ENCODE measurements at regions of chr5 and their contacts with region 1.

Region 1: DNA sequence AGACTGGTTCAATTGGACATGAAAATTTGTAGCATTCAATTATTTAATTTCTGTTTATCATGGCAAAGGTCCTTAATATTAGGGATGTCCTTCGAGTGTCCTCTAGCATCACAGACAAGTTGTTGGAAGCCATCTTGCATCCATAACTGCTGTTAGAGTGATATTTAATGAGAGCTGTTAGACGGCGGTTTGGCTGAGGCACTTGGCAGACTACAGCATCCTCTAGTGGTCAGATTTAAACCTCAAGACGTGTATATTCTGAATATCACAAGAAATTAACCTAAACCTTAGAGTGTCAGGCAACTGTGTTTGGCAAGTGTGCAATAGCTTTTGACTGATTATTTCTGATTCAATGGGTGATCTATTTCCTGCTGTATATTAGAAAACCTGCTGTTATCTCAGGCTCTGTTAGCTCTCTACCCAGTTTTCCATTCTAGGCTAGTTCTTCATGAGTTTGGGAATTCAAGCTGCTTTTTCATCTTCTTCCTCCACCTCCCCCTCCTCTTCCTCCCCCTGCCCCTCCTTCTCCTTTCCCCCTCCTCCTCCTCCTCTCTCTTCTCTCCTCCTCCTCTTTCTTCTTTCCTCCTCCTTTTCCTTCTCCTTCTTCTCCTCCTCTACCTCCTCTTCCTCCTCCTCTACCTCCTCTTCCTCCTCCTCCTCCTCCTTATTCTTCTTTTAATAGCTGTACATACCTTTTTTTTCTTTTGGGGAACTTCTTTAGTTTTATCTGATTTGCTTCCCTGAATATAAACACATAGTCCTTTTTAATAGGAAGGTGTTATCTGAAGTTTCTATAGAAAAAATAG is 8.6 kb downstream of the SPINK1 start:
- DNase-seq: peak; percentile 63
- ATAC-seq: peak; percentile 94
- H3K4me3 Mint-ChIP-seq: no peak overlapping the region
- H3K27ac Mint-ChIP-seq: no peak overlapping the region
- H3K4me1 Mint-ChIP-seq: no peaks in the 10 kb centered on the region
- H3K27me3 Mint-ChIP-seq: no peaks in the 10 kb centered on the region
- CTCF ChIP-seq: peak; percentile 81

Region 2: DNA sequence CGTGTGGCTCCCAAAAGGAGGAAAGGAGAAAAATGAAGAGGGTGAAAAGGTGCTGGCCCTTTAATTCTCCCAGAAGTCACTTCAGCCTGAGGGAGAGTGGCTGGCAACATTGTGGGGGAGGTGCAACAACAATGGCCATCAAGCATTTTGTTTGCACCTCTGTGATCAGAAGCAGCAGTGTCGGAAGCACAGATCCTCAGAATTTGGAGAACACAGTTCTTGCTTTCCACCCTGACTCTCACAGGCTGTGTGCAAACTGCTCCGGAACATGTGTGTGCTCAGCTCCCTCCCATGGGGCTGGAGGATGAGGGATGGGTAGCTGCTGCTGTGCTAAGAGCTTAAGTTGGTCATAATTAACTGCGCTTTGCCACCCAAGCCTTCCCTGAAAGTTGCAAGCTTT is 440.1 kb before region 1 on chr5:
- CTCF ChIA-PET with region 1: no interaction called
- POLR2A ChIA-PET with region 1: no interaction called
- intact Hi-C with region 1: no loop called
- DNase-seq: no peak
- ATAC-seq: no peak
- H3K4me3 Mint-ChIP-seq: no peak overlapping the region
- H3K27ac Mint-ChIP-seq: no peak overlapping the region
- H3K4me1 Mint-ChIP-seq: no peaks in the 10 kb centered on the region
- H3K27me3 Mint-ChIP-seq: peaks cover 7% of the 10 kb centered on the region
- CTCF ChIP-seq: no peak

Region 3: DNA sequence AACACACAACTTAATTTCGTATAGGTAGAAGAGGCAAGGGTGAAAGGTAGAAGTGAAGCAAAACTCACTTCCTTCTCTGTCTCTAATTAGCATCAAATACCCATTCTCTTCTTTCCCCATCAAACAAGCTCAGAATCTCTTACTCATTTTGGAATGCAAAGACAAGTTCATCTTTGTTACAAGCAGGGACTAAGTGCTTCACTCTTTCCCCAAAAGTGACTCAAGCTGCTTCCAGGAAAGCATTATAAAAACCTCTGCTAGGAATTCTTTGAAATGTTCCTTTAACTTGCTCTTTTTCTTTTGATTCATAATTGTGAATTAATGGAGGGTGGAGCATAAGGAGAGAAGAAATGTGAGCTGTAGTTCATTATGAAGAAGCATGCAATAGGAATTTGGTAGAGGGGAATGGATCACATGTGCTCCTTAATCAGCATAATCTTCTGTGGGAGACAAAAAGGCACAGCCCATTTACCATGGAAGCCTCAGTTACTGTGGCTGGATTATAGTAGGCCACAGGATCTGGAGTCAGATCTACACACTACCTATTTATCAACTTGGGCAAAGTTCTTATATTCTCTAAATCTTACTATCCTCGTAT is 203.5 kb before region 1 on chr5:
- CTCF ChIA-PET with region 1: interaction called, 14 read pairs
- POLR2A ChIA-PET with region 1: no interaction called
- intact Hi-C with region 1: no loop called
- DNase-seq: no peak
- ATAC-seq: no peak
- H3K4me3 Mint-ChIP-seq: no peak overlapping the region
- H3K27ac Mint-ChIP-seq: peak overlapping the region; percentile 10
- H3K4me1 Mint-ChIP-seq: peaks cover 2% of the 10 kb centered on the region
- H3K27me3 Mint-ChIP-seq: no peaks in the 10 kb centered on the region
- CTCF ChIP-seq: no peak

Region 4: DNA sequence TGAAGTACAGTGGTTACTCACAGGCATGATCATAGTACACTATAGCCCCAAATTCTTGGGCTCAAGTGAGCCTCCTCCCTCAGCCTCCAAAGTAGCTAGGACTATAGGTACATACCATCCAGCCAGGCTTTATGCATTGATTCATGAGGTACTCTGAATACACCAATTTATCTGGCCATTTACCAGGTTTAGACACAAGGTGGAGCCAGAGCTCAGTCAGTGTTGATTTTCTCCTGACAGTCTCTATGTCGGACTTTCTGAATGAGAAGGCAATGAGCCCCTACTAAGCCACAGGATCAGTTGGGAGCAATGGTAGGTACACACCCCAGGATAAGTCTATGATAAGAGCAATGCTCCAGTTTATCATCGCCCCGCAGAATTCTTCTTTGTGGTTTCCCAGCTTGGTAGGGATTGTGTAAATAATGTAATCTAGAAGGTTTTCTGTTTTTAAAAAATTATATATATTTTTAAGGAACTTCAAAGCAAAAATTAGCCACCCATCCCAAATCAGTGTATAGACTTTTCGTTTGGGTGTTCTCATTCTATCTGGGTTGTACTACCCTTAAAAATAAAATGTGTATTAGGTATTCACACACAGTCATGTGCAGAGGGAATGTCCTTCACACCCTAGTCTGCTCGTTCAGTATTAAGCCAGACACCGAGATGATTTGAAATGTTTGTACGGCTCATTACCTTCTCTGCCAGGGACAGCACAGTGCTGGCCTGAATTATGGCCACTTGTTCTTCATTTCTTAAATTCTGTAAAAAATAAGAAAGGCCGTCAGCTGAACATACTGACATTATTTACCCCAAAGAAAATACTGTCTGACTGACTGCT is 194.6 kb before region 1 on chr5:
- CTCF ChIA-PET with region 1: interaction called, 85 read pairs
- POLR2A ChIA-PET with region 1: interaction called, 4 read pairs
- intact Hi-C with region 1: loop called (anchors 1 kb)
- DNase-seq: peak; percentile 74
- ATAC-seq: peak; percentile 94
- H3K4me3 Mint-ChIP-seq: no peak overlapping the region
- H3K27ac Mint-ChIP-seq: no peak overlapping the region
- H3K4me1 Mint-ChIP-seq: no peaks in the 10 kb centered on the region
- H3K27me3 Mint-ChIP-seq: no peaks in the 10 kb centered on the region
- CTCF ChIP-seq: peak; percentile 72

Region 5: DNA sequence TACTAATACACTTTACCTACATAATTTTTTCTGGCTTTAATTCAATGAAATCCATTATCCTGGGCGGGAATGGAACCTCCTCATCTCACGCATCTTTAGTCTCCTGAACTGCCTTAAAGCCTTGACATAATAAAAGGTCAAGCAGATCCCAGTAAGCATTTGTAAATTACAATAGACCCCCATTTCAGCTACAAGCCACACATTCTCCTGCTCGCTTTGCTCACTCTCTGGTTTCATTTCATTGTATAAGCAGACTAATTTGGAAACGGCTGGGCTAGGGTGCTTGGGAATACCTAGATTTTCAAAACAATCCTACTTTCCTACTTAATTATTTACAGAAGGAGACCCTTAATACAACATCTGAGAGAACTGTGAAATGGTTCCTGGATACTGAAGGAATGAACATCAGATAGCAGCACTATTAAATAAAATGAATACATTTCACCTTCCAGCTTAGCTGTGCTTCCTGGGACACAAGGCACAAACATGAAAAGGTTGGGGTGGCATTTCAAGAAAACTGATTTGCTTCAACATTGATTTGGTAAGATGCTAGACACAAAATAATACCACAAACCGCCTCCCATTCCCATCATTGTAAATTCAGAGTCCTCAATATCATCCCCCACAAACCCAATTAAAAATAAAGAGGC is 41.8 kb before region 1 on chr5:
- CTCF ChIA-PET with region 1: interaction called, 11 read pairs
- POLR2A ChIA-PET with region 1: no interaction called
- intact Hi-C with region 1: no loop called
- DNase-seq: no peak
- ATAC-seq: no peak
- H3K4me3 Mint-ChIP-seq: peak overlapping the region; percentile 98
- H3K27ac Mint-ChIP-seq: peak overlapping the region; percentile 36
- H3K4me1 Mint-ChIP-seq: peaks cover 25% of the 10 kb centered on the region
- H3K27me3 Mint-ChIP-seq: no peaks in the 10 kb centered on the region
- CTCF ChIP-seq: no peak

Region 6: GRCh38 chr5:147809830-147810666 is 12.8 kb before region 1 on chr5:
- CTCF ChIA-PET with region 1: interaction called, 13 read pairs
- POLR2A ChIA-PET with region 1: no interaction called
- intact Hi-C with region 1: no loop called
- DNase-seq: no peak
- ATAC-seq: no peak
- H3K4me3 Mint-ChIP-seq: no peak overlapping the region
- H3K27ac Mint-ChIP-seq: no peak overlapping the region
- H3K4me1 Mint-ChIP-seq: peaks cover 6% of the 10 kb centered on the region
- H3K27me3 Mint-ChIP-seq: no peaks in the 10 kb centered on the region
- CTCF ChIP-seq: no peak